Left lung (tissue), 14 donors: ENCODE measurements at regions of chr6 and their contacts with region 1.

Region 1: GRCh38 chr6:32413427-32414047 is 6.6 kb upstream of the BTNL2 start:
- DNase-seq: peak; percentile 57 to 94 (median 83)
- ATAC-seq: peak; percentile 95
- H3K4me3 ChIP-seq: no peak overlapping the region
- H3K27ac ChIP-seq: no peak overlapping the region
- H3K4me1 ChIP-seq: peaks cover 0 to 14% of the 10 kb centered on the region in 2 donors
- H3K27me3 ChIP-seq: peaks cover 10 to 60% of the 10 kb centered on the region in 2 donors
- CTCF ChIP-seq: peak; percentile 96 to 97

Region 2: DNA sequence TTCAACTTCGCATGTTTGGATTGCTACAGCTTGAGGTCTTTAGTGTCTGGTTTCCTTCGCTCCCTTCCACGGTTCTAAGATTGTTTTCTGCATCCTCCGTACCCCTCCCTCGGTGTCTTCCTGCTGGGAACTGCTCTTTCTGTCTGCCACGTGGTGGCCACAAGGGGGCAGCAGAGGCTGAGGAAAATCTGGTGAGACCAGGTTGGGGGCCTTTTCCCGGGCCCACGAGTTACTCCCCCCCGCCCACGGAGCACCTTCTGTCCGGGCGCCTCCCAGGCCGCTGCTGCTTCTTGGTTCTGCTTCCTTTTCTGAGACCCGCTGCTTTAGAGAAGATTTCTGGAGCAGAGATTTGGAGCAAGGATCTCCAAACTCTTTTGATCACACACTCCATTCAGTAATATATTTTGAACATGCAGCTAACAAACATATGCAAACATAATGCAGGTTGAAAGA is 168.6 kb before region 1 on chr6:
- intact Hi-C with region 1: loop called in 1 of 2 experiments (anchors 10 kb)
- DNase-seq: peak; percentile 66 to 90 (median 80)
- ATAC-seq: peak; percentile 97
- H3K4me3 ChIP-seq: no peak overlapping the region
- H3K27ac ChIP-seq: peak overlapping the region; percentile 27 to 64
- H3K4me1 ChIP-seq: peaks cover 0 to 10% of the 10 kb centered on the region in 2 donors
- H3K27me3 ChIP-seq: no peaks in the 10 kb centered on the region
- CTCF ChIP-seq: peak; percentile 93

Region 3: GRCh38 chr6:32796848-32797776 is 383.6 kb after region 1 on chr6:
- intact Hi-C with region 1: loop called in 1 of 2 experiments (anchors 5 kb)
- DNase-seq: peak; percentile 74 to 83 (median 80)
- ATAC-seq: peak; percentile 92
- H3K4me3 ChIP-seq: peak overlapping the region in 1 of 2 donors; percentile 5
- H3K27ac ChIP-seq: peak overlapping the region in 1 of 2 donors; percentile 21
- H3K4me1 ChIP-seq: peaks cover 0 to 22% of the 10 kb centered on the region in 2 donors
- H3K27me3 ChIP-seq: peaks cover 3 to 30% of the 10 kb centered on the region in 2 donors
- CTCF ChIP-seq: peak; percentile 88 to 95

Region 4: DNA sequence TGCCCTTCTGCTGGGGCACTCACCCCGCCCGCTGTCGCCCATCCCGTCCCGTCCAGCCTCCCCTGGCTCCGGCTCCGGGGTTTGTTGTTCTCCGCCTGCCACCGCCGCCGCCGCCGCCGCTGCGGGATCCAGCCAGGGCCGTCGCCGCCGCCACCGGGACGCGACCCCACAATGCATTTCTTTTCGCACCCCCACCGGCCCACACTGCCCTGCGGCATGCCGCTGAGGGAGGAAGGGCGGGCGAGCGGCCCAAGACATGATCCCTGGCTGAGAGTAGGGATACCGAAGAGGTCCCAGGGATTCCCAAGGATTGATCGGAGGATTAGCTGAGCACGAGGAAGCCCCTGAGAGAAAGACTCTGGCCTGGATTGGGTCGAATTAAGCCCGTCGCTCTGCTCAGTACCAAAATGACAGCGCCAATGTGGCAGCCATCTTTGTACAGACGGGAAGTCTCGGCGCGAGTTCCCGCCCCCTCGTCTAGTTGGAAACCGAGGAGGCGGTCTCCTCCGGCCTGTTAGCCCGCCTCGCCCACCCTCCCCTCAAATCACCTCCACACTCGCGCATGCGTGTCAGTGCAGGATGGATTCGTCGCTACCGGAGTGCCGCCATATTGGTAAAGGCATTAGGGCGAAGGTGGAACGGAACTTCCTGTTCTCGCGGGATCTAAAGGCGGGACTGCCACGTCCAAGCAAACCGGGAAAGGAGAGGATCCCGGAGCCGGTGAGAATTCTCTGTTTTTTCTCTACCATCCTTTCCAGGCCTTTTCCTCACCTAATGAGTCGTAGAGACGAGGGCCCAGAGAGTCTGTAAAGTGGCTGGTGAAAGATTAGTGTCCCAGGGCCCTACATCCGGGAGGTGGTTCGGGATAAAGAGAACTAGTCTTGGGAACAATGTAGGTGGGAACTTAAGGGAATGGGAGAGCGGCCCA is 786.9 kb after region 1 on chr6 and contains the starts of genes RXRB and SLC39A7:
- intact Hi-C with region 1: no loop called
- DNase-seq: peak; percentile 99 to 100 (median 100)
- ATAC-seq: peak; percentile 84
- H3K4me3 ChIP-seq: peak within 1 kb of the TSS; percentile 96
- H3K27ac ChIP-seq: peak within 1 kb of the TSS; percentile 95
- H3K4me1 ChIP-seq: peaks cover 42 to 69% of the 10 kb centered on the region in 2 donors
- H3K27me3 ChIP-seq: no peaks in the 10 kb centered on the region
- CTCF ChIP-seq: no peak
- polyA plus RNA-seq, gene RXRB: 55.1 to 76.2 (median 62.9) TPM
- polyA plus RNA-seq, gene SLC39A7: 71.9 to 103 (median 98.8) TPM